ENCODE measurements at regions of chr2 and their contacts with region 1.

Region 1: GRCh38 chr2:63059793-63060471 is 9.3 kb downstream of the OTX1 start:
- DNase-seq: peak; percentile 37
- H3K4me3 Mint-ChIP-seq: peak overlapping the region; percentile 67
- H3K27ac Mint-ChIP-seq: peak overlapping the region; percentile 54
- H3K4me1 Mint-ChIP-seq: no peaks in the 10 kb centered on the region
- H3K27me3 Mint-ChIP-seq: no peaks in the 10 kb centered on the region
- CTCF ChIP-seq: no peak

Region 2: GRCh38 chr2:62956651-62957050 is 103.3 kb before region 1 on chr2:
- CTCF ChIA-PET with region 1: no interaction called
- intact Hi-C with region 1: no loop called
- DNase-seq: no peak
- H3K4me3 Mint-ChIP-seq: no peak overlapping the region
- H3K27ac Mint-ChIP-seq: no peak overlapping the region
- H3K4me1 Mint-ChIP-seq: no peaks in the 10 kb centered on the region
- H3K27me3 Mint-ChIP-seq: no peaks in the 10 kb centered on the region
- CTCF ChIP-seq: no peak

Region 3: GRCh38 chr2:63047321-63048279 is 12.3 kb before region 1 on chr2:
- CTCF ChIA-PET with region 1: no interaction called
- intact Hi-C with region 1: no loop called
- DNase-seq: no peak
- H3K4me3 Mint-ChIP-seq: no peak overlapping the region
- H3K27ac Mint-ChIP-seq: no peak overlapping the region
- H3K4me1 Mint-ChIP-seq: peaks cover 9% of the 10 kb centered on the region
- H3K27me3 Mint-ChIP-seq: no peaks in the 10 kb centered on the region
- CTCF ChIP-seq: no peak

Region 4: GRCh38 chr2:63488118-63488713 is 428.3 kb after region 1 on chr2:
- CTCF ChIA-PET with region 1: no interaction called
- intact Hi-C with region 1: loop called (anchors 10 kb)
- DNase-seq: peak; percentile 39
- H3K4me3 Mint-ChIP-seq: no peak overlapping the region
- H3K27ac Mint-ChIP-seq: no peak overlapping the region
- H3K4me1 Mint-ChIP-seq: no peaks in the 10 kb centered on the region
- H3K27me3 Mint-ChIP-seq: no peaks in the 10 kb centered on the region
- CTCF ChIP-seq: peak; percentile 15

Measured in Calu3 (cell line).